ENCODE measurements at regions of chr6 and their contacts with region 1.

Region 1: GRCh38 chr6:37169496-37170272 is at the start of gene PIM1:
- DNase-seq: peak; percentile 99
- H3K4me3 Mint-ChIP-seq: peak within 1 kb of the TSS; percentile 96
- H3K27ac Mint-ChIP-seq: peak within 1 kb of the TSS; percentile 93
- H3K4me1 Mint-ChIP-seq: peaks cover 17% of the 10 kb centered on the region
- H3K27me3 Mint-ChIP-seq: no peaks in the 10 kb centered on the region
- CTCF ChIP-seq: no peak
- total RNA-seq, gene PIM1: 18.6 and 19.1 TPM in 2 replicates

Region 2: DNA sequence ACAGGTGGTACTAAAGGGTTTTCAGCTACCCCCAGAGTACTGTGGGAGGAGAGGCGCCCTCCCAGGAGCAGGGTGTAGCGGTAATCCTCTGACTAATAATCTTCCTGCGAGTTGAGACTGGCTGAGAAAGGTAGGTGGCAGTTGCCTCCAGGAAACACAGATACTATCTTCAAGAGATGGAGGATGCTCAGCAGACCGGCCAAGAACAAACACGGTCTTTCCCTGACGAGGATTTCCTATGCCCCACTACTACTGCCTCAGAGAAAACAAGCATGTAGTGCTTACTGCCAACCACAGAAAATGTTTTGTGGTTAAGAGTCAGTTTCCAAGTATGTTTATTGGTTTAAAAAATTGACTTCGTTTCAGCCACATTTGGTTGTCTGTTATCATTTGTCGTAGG is 257.1 kb before region 1 on chr6:
- CTCF ChIA-PET with region 1: interaction called, 4 read pairs
- intact Hi-C with region 1: loop called (anchors 10 kb)
- DNase-seq: no peak
- H3K4me3 Mint-ChIP-seq: no peak overlapping the region
- H3K27ac Mint-ChIP-seq: peak overlapping the region; percentile 28
- H3K4me1 Mint-ChIP-seq: peaks cover 51% of the 10 kb centered on the region
- H3K27me3 Mint-ChIP-seq: no peaks in the 10 kb centered on the region
- CTCF ChIP-seq: no peak

Region 3: DNA sequence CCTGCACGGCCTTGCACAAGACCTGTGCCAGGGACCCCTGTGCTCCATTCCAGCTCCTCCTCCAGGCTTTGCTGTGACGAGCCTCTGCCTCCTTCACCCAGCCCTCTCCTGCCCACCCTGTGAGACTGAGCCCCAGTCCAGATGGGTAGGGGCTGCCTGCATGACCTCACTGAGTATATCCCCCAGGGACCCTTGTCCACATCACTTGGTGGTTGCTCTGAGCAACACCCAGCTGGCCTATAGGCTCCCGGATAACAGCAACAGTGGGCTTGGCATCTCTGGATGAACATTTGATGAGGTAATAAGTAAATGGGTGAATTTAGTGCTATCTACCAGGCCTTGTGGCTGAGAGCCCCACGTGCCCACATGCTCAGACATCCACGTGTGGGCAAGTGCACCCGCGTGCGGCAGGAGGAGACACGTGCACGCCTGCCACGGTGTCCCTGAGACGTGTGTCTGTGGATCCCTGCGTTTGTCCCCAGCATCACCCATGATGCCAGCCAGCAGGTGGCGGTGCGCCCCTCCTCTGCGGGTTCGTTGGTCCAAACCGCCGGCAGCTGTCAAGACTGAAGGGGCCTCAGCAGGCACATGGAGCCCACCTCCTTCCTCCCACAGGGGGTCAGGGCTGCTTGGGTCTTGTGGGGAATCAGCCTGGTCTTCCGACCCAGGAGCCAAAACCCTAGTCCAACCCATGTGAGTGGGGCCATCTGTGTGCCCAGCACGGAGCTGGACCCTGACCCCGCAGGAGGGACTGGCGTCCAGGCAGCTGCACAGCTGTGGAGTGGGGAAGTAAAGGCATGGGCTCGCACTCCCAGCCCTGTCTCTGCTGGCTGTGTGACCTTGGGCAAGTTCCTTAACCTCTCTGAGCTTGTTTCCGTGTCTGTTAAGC is 118.3 kb before region 1 on chr6:
- CTCF ChIA-PET with region 1: interaction called, 58 read pairs
- intact Hi-C with region 1: loop called (anchors 1 kb)
- DNase-seq: peak; percentile 95
- H3K4me3 Mint-ChIP-seq: no peak overlapping the region
- H3K27ac Mint-ChIP-seq: no peak overlapping the region
- H3K4me1 Mint-ChIP-seq: peaks cover 47% of the 10 kb centered on the region
- H3K27me3 Mint-ChIP-seq: no peaks in the 10 kb centered on the region
- CTCF ChIP-seq: peak; percentile 92

Region 4: DNA sequence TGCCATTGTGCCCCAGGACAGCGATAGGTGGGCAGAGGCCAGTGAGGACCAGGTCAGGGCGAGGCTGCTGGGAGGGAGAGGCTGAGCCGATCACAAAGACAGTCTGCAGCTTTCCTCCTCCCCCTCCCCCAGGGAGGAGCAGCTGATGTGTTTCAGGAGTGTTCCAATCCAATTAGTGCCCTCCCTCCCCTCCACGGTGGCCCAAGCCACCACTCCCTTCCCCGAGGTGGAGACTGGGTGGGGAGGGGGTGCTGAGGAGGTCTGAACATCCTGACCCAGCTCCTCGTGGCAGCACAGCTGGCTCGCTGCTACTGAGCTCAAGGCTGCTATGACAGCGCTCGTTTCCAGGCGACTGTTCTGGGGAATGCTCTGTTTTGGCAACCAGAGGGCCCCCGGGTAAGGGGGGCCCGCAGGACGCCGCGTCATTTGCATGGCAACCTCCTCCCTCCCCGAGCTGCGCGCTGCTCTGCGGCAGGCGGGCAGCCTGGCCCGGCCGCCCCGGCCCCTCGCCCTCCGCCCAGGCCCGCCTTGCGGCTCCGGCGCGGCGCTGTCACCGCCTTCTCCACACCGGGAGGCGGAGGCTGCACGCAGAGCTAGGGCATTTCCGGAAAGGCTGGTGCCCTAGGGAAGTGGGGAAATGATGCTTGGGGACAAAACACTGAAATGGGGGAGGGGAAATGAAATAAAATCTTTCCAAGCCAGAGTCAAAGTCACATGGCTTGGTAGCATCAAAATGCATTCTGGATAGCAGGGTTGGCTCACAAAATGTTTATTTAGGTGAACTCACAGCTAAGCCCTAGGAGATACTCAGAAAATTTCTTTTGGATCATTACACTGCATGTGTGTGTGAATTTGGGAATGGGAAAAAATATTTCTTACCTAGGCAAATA is 67.2 kb before region 1 on chr6:
- CTCF ChIA-PET with region 1: interaction called, 6 read pairs
- intact Hi-C with region 1: loop called (anchors 2 kb)
- DNase-seq: peak; percentile 75
- H3K4me3 Mint-ChIP-seq: peak overlapping the region; percentile 67
- H3K27ac Mint-ChIP-seq: peak overlapping the region; percentile 81
- H3K4me1 Mint-ChIP-seq: peaks cover 45% of the 10 kb centered on the region
- H3K27me3 Mint-ChIP-seq: no peaks in the 10 kb centered on the region
- CTCF ChIP-seq: no peak

Region 5: GRCh38 chr6:37207903-37208456 is 38.3 kb after region 1 on chr6:
- CTCF ChIA-PET with region 1: interaction called, 16 read pairs
- intact Hi-C with region 1: loop called (anchors 1 kb)
- DNase-seq: peak; percentile 95
- H3K4me3 Mint-ChIP-seq: no peak overlapping the region
- H3K27ac Mint-ChIP-seq: no peak overlapping the region
- H3K4me1 Mint-ChIP-seq: peaks cover 28% of the 10 kb centered on the region
- H3K27me3 Mint-ChIP-seq: no peaks in the 10 kb centered on the region
- CTCF ChIP-seq: peak; percentile 89

Region 6: DNA sequence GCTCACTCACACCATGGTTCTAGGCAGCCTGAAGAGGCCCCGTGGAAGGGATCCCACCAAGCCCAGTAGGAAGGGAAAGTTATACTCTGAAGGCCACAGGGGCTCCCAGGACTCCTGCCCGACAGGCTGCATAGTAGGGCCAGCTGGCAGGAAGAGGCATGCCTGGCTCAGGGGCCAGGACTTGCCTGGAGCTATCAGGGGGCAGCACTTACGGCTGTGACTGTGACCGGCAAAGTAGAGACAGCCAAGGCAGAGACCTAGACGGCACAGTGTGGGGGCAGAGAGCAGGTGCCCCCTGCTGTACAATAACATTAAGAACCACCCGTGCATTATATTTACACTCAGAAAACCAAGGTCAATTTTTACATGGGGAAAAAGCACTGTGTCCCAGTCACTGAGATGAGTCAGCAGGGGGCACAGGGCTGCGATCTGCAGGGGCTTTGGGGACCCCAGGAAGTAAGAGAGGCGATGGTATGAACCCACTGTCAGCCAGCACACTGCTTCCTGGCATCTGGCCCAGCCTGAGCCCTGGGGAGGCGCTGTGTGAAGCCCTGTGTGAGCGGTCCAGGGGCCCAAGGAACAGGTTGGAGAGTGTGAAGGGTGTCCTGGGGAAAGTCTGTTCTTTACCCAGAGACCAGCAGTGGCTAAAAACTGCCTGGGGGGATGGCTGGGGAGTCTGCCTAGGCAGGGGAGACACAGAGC is 320.1 kb after region 1 on chr6:
- CTCF ChIA-PET with region 1: no interaction called
- intact Hi-C with region 1: no loop called
- DNase-seq: no peak
- H3K4me3 Mint-ChIP-seq: no peak overlapping the region
- H3K27ac Mint-ChIP-seq: no peak overlapping the region
- H3K4me1 Mint-ChIP-seq: no peaks in the 10 kb centered on the region
- H3K27me3 Mint-ChIP-seq: no peaks in the 10 kb centered on the region
- CTCF ChIP-seq: no peak

Measured in Calu3 (cell line).